ENCODE measurements at regions of chr1 and their contacts with region 1.

Region 1: DNA sequence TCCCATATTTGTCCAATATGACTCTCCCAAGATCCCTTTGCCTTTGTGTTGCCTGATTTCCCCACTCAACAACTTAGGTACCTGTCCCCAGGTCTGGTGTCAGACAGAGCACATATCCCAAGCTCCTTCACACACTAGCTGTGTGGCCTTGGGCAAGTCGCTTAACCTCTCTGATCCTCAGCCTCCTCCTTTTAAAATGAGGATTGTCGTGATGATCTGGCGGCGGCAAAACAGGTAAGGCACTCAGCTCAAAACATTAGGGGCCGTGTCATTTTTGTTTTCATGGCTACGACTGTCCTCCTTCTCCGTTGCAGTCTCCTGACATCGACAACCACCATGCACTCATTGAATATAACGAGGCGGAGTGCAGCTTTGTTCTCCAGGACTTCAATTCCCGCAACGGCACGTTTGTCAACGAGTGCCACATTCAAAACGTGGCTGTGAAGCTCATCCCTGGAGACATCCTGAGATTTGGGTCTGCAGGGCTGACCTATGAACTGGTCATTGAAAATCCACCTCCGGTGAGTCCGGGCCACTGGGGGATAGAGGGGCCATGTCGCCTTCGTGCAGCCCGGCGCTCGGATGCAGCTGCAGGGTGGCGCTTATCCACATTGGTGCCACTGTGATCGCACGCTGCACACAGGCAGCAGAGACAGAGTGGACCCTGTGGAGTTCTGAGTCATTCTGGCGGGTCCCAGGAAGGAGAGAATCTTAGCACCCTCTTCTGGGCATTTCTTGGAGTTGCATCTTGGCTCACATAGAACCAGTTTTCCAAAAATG is 25.2 kb downstream of the FHAD1 start:
- DNase-seq: peak; percentile 92
- ATAC-seq: peak; percentile 97
- H3K4me3 ChIP-seq: peak overlapping the region; percentile 69
- H3K27ac ChIP-seq: no peak overlapping the region
- H3K4me1 ChIP-seq: peaks cover 10% of the 10 kb centered on the region; the same call in 1 of the 2 replicates
- H3K27me3 ChIP-seq: no peaks in the 10 kb centered on the region
- CTCF ChIP-seq: peak; percentile 81

Region 2: DNA sequence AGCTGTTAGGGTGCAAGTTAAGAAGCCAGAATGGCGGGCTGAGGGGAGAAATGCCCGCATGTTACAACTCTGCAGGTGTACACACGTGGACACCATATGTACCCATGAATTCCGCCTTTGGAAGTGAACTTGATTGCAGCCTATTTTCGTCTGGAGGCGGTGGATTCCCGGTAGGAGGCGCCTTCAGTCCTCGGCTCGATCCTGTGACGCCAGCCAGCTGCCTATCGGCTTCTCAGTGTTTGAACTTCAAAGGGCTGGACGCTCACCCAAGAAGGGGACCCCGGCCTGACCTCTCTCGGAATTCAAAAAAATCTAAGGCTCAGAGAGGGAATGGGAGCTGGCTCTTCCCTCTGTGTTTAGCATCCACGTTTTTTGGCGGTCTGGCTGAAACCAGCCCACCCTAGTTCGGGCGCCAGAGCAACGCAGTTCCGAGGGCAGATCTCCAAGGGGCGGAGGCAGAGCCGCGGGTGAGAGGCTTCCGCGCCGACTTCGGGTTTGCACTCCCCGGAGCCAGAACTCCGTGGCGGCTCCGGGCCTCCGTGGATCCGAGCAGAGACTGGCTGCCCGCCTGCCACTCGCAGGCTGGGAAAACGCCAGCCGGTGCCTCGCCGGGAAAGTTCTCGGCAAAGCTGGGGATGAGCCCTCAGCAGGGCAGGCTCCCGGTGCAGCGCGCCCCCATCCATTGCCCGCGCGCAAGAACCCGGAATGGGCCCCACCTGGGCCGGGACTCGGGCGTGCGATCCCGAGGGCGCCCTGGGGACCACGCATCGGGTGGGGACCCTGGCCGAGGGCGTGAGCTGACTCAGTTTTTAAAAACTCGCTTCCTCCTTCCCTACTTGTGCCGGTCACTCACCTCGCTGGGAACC is 119.6 kb before region 1 on chr1:
- CTCF ChIA-PET with region 1: interaction called, 3 read pairs
- POLR2A ChIA-PET with region 1: no interaction called
- intact Hi-C with region 1: loop called (anchors 1 kb)
- DNase-seq: peak; percentile 89
- ATAC-seq: peak; percentile 52
- H3K4me3 ChIP-seq: peak overlapping the region; percentile 76
- H3K27ac ChIP-seq: peak overlapping the region; percentile 67
- H3K4me1 ChIP-seq: peaks cover 21% of the 10 kb centered on the region
- H3K27me3 ChIP-seq: no peaks in the 10 kb centered on the region
- CTCF ChIP-seq: peak; percentile 80

Region 3: DNA sequence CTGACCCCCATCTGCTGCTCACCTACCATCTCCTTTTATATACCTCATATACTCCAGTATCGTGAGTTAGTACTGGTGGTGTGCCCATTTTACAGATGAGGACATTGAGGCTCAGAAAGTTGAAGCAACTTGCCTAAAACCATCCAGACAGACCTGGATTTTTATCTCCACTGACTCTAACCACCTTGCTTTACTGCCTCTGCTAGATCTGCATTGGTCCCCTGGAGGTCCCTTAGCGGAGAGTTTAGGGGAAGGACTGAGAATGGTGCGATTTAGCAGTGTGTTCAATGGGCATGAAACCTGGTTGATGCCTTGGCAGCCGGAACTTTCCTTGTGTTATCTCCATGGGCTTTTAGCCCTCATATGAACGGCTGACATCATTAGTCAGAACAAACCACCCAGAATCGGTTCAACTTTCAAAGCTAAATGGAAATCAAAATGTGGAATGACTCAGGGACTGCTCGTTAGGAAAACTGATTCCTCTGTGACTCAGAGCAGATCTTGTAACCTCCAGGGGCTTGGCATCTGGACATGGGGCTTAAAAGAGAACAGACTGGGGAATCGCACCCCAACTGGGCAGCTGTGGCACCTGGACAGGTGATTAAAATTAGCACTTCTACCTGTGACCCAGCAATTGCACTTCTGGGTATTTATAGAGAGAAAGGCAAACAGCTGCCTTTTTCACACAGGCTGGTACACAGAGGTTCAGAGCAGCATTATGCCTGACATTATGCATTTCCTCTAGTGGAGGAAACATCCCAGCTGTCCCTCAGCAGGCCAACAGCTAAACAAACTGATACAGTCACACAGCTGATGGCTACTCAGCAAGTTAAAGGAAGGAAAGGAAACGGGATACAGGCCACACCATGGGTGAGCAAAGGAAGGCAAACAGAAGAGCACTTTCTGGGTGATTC is 93.4 kb before region 1 on chr1:
- CTCF ChIA-PET with region 1: no interaction called
- POLR2A ChIA-PET with region 1: no interaction called
- intact Hi-C with region 1: no loop called
- DNase-seq: peak; percentile 94
- ATAC-seq: peak; percentile 92
- H3K4me3 ChIP-seq: peak overlapping the region; percentile 22; the same call in 1 of the 2 replicates
- H3K27ac ChIP-seq: peak overlapping the region; percentile 95
- H3K4me1 ChIP-seq: peaks cover 48% of the 10 kb centered on the region
- H3K27me3 ChIP-seq: no peaks in the 10 kb centered on the region
- CTCF ChIP-seq: no peak

Region 4: GRCh38 chr1:15196807-15197530 is 75.2 kb before region 1 on chr1:
- CTCF ChIA-PET with region 1: interaction called, 5 read pairs
- POLR2A ChIA-PET with region 1: no interaction called
- intact Hi-C with region 1: loop called (anchors 1 kb)
- DNase-seq: no peak
- ATAC-seq: no peak
- H3K4me3 ChIP-seq: no peak overlapping the region
- H3K27ac ChIP-seq: no peak overlapping the region
- H3K4me1 ChIP-seq: peaks cover 24% of the 10 kb centered on the region
- H3K27me3 ChIP-seq: no peaks in the 10 kb centered on the region
- CTCF ChIP-seq: no peak

Region 5: DNA sequence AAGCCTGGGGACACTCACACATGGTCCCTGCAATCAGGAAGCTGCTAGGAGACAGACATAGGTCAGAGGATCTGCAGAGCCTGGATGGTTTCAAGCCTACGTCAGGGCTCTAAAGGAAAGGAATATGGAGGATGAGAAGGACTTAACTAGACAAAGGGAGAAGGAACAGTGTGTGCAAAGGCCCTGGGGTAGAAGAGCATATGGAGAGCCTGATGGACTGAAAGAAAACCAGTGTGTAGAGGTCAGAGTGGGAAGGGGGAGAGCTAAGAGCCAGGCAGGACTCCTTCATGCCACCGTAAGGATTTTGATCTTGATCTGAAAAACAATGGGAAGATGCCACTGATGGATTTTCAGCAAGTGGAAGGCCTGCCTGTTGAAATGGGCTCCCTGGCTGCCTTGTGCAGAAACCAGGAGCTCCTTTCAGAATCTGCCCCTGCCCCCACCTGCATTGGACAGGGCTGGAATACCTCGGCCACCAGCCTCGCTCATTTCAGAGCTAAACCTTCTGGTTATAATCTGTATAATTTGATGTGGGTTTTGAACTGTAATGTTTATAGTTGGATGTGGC is 16.5 kb before region 1 on chr1:
- CTCF ChIA-PET with region 1: interaction called, 11 read pairs
- POLR2A ChIA-PET with region 1: no interaction called
- intact Hi-C with region 1: no loop called
- DNase-seq: no peak
- ATAC-seq: no peak
- H3K4me3 ChIP-seq: no peak overlapping the region
- H3K27ac ChIP-seq: no peak overlapping the region
- H3K4me1 ChIP-seq: no peaks in the 10 kb centered on the region
- H3K27me3 ChIP-seq: no peaks in the 10 kb centered on the region
- CTCF ChIP-seq: no peak

Region 6: DNA sequence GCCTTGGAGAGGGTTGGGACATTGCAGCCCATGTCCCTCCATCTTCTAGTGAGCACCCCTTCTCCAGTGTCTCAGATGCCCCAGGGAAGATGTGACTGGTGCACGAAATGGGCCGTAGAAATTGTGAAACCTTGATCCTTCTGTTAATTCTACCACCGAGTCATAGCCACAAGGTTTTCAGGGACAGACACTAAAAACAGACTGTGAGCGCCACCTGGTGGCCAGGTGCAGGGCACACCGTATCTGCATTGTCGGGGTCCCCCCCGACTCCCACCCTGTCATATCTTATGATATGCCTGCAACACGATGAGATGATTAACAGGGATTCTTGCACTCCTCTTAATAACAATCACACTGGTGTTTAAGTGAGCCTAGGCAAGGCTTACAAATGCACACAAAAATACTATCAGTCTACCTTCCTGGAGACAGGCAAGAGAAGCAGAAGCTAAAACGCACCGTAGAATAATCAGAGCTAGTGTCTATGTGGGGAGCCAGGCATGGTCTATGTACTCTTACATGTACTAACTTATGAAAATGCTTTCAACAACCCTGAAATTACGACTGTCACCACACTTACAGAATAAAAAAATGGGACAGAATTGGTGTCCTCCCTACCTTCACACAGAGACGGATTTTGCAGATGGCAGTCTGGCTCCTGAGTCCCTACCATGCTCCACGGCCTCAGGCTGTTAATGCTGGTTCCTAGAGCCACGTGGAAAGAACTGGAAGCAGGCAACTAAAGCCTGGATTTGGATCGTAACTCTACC is 32.7 kb after region 1 on chr1:
- CTCF ChIA-PET with region 1: no interaction called
- POLR2A ChIA-PET with region 1: no interaction called
- intact Hi-C with region 1: loop called (anchors 1 kb)
- DNase-seq: peak; percentile 73
- ATAC-seq: peak; percentile 77
- H3K4me3 ChIP-seq: no peak overlapping the region
- H3K27ac ChIP-seq: no peak overlapping the region
- H3K4me1 ChIP-seq: no peaks in the 10 kb centered on the region
- H3K27me3 ChIP-seq: no peaks in the 10 kb centered on the region
- CTCF ChIP-seq: peak; percentile 98

Measured in PC-3 (cell line).